ENCODE measurements at regions of chr2 and their contacts with region 1.

Region 1: GRCh38 chr2:61764035-61764800 is 89.6 kb downstream of the FAM161A start:
- DNase-seq: peak; percentile 97
- ATAC-seq: peak; percentile 99 to 100

Region 2: GRCh38 chr2:61658841-61659780 is 105.1 kb before region 1 on chr2:
- intact Hi-C with region 1: loop called in 1 of 2 experiments (anchors 5 kb)
- DNase-seq: no peak
- ATAC-seq: peak; percentile 80 to 90

Region 3: DNA sequence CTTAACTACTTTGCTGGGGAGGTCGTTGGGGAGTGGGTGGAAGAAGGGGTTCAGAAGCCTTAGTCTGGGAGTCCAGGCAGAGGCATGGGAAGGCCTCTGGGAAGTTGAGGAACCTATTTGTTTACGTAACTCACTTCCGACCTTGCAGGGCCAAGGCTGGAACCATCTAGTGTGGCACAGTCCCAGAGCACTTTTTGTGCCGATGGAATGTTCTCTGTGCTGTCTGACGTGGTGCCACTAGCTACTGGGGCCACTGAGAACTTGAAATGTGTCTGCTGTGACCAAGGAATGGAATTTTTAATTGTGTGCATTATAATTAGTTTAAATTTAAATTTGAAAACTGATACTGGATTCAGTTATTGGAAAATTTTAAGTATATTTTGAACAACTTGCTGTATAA is 50.0 kb before region 1 on chr2:
- intact Hi-C with region 1: loop called in 1 of 2 experiments (anchors 2 kb)
- DNase-seq: peak; percentile 44
- ATAC-seq: peak; percentile 54 to 76